WTC11 (cell line): ENCODE measurements at regions of chr1 and their contacts with region 1.

Region 1: DNA sequence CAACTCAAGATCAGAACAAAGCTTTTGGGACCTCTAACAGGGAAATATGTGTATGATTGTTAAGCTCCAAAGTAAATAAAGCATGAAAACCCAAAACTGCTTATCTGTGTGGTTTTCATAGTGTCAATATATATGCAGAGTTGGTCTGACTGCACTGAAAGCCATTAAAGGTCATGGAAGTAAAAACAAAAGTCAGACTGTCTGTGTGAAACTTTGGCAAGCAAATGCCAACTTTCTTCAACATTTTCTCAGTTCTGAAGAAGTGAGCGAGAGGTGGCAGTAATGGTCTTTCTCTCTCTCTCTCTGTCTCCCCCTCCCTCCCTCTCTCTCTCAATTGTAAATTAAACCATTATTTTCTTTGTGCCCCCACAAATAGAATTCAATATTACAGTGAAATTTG is 100.1 kb upstream of the S1PR1 start:
- DNase-seq: no peak
- ATAC-seq: peak; percentile 76
- H3K4me3 Mint-ChIP-seq: peak overlapping the region; percentile 51
- H3K27ac Mint-ChIP-seq: peak overlapping the region; percentile 35; the same call in 1 of the 2 replicates
- H3K4me1 Mint-ChIP-seq: peaks cover 40% of the 10 kb centered on the region
- H3K27me3 Mint-ChIP-seq: no peaks in the 10 kb centered on the region
- CTCF ChIP-seq: no peak

Region 2: DNA sequence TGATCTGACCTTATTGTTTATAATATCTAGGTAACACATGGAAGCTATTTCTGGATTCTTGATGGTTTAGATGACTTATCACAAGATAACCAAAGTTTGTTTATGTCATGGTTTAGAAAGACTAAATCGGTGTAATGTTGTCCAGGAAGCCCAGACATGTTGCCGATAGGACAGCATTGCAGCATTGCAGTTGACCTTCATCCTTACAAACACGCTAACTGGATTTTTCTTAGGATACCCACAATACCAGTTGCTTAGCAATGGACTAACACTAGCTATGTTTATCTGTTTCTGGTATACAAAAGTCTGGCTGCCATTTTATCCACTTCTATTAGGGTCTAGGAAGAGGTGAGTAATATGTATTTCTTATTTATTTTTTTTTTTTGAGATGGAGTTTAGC is 99.4 kb before region 1 on chr1:
- CTCF ChIA-PET with region 1: no interaction called
- POLR2A ChIA-PET with region 1: no interaction called
- DNase-seq: no peak
- ATAC-seq: no peak
- H3K4me3 Mint-ChIP-seq: no peak overlapping the region
- H3K27ac Mint-ChIP-seq: no peak overlapping the region
- H3K4me1 Mint-ChIP-seq: peaks cover 6% of the 10 kb centered on the region
- H3K27me3 Mint-ChIP-seq: no peaks in the 10 kb centered on the region; the same call in 1 of the 2 replicates
- CTCF ChIP-seq: no peak

Region 3: DNA sequence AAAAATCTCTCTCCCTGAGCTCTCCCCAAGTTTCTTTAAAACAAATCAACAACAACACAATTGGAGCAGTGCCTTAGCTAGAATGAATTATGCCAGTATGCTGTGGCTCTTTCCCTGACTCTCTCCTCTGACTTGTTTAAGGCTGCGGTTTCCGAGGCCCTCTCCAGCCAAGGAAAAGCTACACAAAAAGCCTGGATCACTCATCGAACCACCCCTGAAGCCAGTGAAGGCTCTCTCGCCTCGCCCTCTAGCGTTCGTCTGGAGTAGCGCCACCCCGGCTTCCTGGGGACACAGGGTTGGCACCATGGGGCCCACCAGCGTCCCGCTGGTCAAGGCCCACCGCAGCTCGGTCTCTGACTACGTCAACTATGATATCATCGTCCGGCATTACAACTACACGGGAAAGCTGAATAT is 101.9 kb after region 1 on chr1:
- CTCF ChIA-PET with region 1: interaction called, 35 read pairs
- POLR2A ChIA-PET with region 1: interaction called, 3 read pairs
- DNase-seq: peak; percentile 93
- ATAC-seq: peak; percentile 59
- H3K4me3 Mint-ChIP-seq: peak overlapping the region; percentile 86
- H3K27ac Mint-ChIP-seq: no peak overlapping the region
- H3K4me1 Mint-ChIP-seq: peaks cover 24% of the 10 kb centered on the region
- H3K27me3 Mint-ChIP-seq: peaks cover 47% of the 10 kb centered on the region
- CTCF ChIP-seq: peak; percentile 79